Mammary epithelial cell (primary cell): ENCODE measurements at regions of chr21 and their contacts with region 1.

Region 1: GRCh38 chr21:39048064-39048463 is 135.2 kb downstream of the PSMG1 start:
- DNase-seq: peak; percentile 95
- H3K4me3 ChIP-seq: peak overlapping the region in 1 of 3 experiments; percentile 19
- H3K27ac ChIP-seq: peak overlapping the region; percentile 97
- H3K4me1 ChIP-seq: peaks cover 34% of the 10 kb centered on the region
- H3K27me3 ChIP-seq: no peaks in the 10 kb centered on the region
- CTCF ChIP-seq: no peak

Region 2: GRCh38 chr21:38805328-38806152 is 242.5 kb before region 1 on chr21 and contains the start of gene ETS2:
- CTCF ChIA-PET with region 1: no interaction called
- dilution Hi-C with region 1: no loop called
- in situ Hi-C with region 1: no loop called
- intact Hi-C with region 1: loop called (anchors 2 kb)
- DNase-seq: peak; percentile 92
- H3K4me3 ChIP-seq: peak within 1 kb of the TSS; percentile 88 to 93 (median 89)
- H3K27ac ChIP-seq: peak within 1 kb of the TSS; percentile 90
- H3K4me1 ChIP-seq: peaks cover 46% of the 10 kb centered on the region
- H3K27me3 ChIP-seq: no peaks in the 10 kb centered on the region
- CTCF ChIP-seq: no peak
- total RNA-seq, gene ETS2: 60.3 to 62.3 TPM

Region 3: DNA sequence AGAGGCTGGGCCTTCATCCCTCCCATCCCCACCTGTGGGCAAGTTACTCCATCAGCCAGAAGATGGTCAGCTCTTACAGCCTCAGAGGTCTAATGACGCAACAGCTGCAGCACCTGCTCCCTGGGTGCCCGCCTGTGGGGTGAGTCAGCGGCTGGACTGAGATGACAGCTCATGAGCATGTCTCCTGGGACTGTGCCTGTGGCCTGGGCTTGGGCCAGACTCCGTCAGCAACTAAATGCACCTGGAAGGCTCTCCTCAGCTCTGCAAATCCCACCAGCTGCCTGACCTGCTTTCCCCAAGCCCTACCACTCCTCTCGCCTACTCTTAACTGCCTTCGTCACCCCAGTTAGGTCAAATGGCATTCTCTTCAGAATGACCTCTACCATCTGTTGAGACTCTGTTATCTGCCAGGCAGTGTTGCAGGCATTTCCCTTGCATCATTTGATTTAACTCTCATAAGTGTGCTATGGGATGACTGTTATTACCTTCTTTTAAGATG is 194.6 kb before region 1 on chr21:
- CTCF ChIA-PET with region 1: no interaction called
- dilution Hi-C with region 1: no loop called
- in situ Hi-C with region 1: no loop called
- intact Hi-C with region 1: loop called (anchors 1 kb)
- DNase-seq: peak; percentile 98
- H3K4me3 ChIP-seq: no peak overlapping the region
- H3K27ac ChIP-seq: peak overlapping the region; percentile 45
- H3K4me1 ChIP-seq: peaks cover 28% of the 10 kb centered on the region
- H3K27me3 ChIP-seq: no peaks in the 10 kb centered on the region
- CTCF ChIP-seq: no peak

Region 4: GRCh38 chr21:38958940-38959691 is 88.9 kb before region 1 on chr21:
- CTCF ChIA-PET with region 1: no interaction called
- dilution Hi-C with region 1: no loop called
- in situ Hi-C with region 1: no loop called
- intact Hi-C with region 1: loop called (anchors 5 kb)
- DNase-seq: peak; percentile 78
- H3K4me3 ChIP-seq: no peak overlapping the region
- H3K27ac ChIP-seq: no peak overlapping the region
- H3K4me1 ChIP-seq: peaks cover 37% of the 10 kb centered on the region
- H3K27me3 ChIP-seq: no peaks in the 10 kb centered on the region
- CTCF ChIP-seq: no peak

Region 5: GRCh38 chr21:39004634-39005501 is 43.2 kb before region 1 on chr21:
- CTCF ChIA-PET with region 1: no interaction called
- dilution Hi-C with region 1: no loop called
- in situ Hi-C with region 1: no loop called
- intact Hi-C with region 1: loop called (anchors 5 kb)
- DNase-seq: no peak
- H3K4me3 ChIP-seq: no peak overlapping the region
- H3K27ac ChIP-seq: no peak overlapping the region
- H3K4me1 ChIP-seq: peaks cover 10% of the 10 kb centered on the region
- H3K27me3 ChIP-seq: no peaks in the 10 kb centered on the region
- CTCF ChIP-seq: no peak

Region 6: DNA sequence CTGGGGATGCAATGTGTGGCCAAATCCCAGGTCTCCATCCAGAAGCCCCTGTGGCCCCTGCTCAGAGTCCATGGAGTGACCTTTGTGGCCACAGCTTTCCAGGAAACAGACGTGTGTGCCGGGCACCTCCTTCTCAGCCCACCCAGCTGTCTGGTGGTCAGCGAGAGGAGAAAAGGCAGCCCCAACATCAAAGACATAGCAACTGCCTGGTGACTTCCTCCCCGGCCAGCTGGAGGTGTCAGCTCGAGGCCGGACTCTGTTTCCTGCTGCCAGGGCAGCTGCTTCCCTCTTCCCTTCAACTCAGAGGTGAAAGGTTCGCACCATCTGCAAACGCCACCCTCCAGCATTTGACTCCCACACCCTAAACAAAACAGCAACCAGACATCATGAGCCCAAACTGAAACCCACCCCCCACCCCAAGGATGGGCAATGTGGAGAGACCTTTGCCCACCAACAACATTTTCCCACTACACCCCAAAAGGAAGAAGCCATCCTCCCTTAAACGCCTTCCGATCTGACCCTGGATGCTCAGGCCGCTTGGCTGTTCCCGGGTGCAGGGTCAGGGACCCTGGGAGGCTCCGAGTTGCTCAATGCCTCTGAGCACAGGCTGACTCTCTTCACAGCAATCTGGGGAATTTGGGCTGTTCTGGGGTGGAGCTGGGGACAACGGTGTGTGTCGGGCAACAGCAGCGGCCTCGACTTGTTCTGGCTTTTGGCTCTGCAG is 27.2 kb before region 1 on chr21:
- CTCF ChIA-PET with region 1: no interaction called
- dilution Hi-C with region 1: no loop called
- in situ Hi-C with region 1: no loop called
- intact Hi-C with region 1: loop called (anchors 2 kb)
- DNase-seq: peak; percentile 77
- H3K4me3 ChIP-seq: no peak overlapping the region
- H3K27ac ChIP-seq: peak overlapping the region; percentile 54
- H3K4me1 ChIP-seq: peaks cover 34% of the 10 kb centered on the region
- H3K27me3 ChIP-seq: no peaks in the 10 kb centered on the region
- CTCF ChIP-seq: no peak

Region 7: DNA sequence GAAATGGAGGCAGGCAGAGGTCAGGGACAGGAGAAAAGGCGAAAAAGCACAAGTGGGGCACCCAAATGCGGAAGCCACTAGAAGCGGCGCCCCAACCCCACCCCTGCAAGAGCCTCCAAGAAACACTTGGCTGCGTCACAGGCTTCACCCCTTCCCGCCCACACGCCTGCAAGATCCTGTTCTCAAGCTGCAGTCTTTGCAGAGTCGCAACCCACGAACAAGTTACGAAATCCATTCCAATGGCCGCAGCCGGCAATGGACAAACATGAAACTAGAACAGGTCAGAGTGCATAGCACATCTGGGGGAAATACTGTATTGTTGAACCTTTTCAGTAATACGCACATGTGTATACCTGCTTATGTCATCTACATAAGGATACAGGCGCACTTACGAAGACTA is 31.6 kb after region 1 on chr21:
- CTCF ChIA-PET with region 1: no interaction called
- dilution Hi-C with region 1: no loop called
- in situ Hi-C with region 1: no loop called
- intact Hi-C with region 1: loop called (anchors 2 kb)
- DNase-seq: no peak
- H3K4me3 ChIP-seq: no peak overlapping the region
- H3K27ac ChIP-seq: no peak overlapping the region
- H3K4me1 ChIP-seq: peaks cover 11% of the 10 kb centered on the region
- H3K27me3 ChIP-seq: no peaks in the 10 kb centered on the region
- CTCF ChIP-seq: no peak